H1 (cell line): ENCODE measurements at regions of chr17 and their contacts with region 1.

Region 1: DNA sequence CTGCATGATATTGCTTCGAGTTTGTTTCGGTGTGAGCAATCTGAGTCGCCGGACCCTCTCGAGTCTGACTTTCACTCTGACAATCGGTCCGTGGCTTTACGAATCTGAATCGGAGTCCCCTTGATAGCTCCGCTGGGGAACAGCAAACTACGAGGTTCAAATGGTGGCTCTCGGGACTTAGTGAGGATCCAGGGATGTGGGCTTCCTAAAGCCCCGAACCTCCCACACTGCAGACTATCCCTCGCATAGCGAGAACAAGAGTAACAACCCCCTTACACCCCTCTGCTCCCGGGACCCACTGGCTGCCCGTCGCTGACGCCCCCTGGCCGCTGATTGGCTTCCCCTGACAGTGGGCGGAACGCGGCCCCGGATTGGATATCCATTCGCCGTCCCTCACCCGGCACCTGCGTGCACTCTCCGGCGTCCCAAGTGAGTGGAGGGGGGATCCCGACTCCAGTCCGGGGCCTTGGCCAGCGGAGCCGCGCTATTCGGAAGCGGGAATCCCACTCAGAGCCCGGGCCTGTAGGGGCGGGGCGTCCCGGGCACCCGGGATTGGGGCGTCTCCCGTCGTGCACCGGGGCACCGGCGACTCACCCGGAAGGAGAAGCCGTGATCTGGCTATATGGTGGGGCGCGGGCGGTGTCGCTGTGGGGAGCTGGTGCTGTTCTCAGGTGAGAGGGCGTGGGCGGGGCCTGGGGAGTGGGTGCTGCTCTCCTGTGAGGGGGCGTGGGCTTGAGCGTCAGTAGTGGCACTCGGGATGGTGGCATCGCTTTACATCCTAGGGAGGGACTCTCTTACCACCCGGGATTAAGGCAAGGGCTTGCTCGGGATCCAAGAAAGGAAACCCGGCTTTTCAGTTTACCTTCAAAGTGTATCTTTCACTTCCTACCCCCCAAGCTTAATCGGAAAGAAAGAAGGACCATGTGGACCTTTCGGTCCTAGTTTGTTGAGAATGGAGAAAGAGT is at the start of gene SNX11:
- DNase-seq: peak; percentile 61 to 96
- H3K4me3 ChIP-seq: peak within 1 kb of the TSS; percentile 82 to 95 (median 88)
- H3K27ac ChIP-seq: peak within 1 kb of the TSS; percentile 69
- H3K4me1 ChIP-seq: no peaks in the 10 kb centered on the region; a peak in 1 of 7 replicates
- H3K27me3 ChIP-seq: no peaks in the 10 kb centered on the region
- CTCF ChIP-seq: no peak
- EP300 ChIP-seq: no peak
- POLR2A ChIP-seq: peak in 1 of 2 experiments; percentile 41; a peak in 1 of 3 replicates
- RAD21 ChIP-seq: no peak
- total RNA-seq, gene SNX11: 20.9 and 21.1 TPM in 2 replicates

Region 2: DNA sequence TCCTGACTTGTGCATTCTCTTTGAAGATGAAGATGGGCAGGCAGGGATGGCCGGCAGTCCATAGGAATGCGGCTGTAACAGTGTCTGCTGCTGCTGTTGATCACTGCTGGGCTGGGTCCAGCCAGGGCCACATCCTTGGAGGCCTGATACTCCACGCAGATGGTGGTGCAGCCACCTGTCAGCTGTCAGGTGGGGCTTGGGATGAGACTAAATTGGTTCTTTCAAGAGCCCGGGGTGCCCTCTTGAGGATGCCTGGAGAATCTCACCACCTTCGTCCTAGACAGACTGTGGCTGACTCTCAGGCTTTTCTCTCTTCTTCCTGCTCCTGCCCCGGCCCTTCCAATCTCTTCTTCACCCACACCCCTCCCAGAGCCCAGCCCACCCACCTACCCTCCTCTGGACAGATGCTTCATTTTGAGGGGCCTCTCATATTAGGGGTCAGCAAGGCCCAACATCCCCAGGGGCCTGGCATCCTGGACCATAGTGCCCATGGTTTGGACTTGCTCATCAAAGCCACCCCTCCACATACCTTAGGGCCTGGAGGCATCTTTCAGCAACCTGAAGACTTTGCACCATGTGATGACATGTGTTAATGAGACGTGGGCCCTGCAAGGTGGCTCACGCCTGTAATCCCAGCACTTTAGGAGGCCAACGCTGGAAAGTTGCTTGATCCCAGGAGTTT is 305.0 kb before region 1 on chr17:
- CTCF ChIA-PET with region 1: no interaction called
- POLR2A ChIA-PET with region 1: no interaction called
- DNase-seq: peak in 1 of 2 experiments; percentile 74
- H3K4me3 ChIP-seq: no peak overlapping the region
- H3K27ac ChIP-seq: no peak overlapping the region
- H3K4me1 ChIP-seq: no peaks in the 10 kb centered on the region
- H3K27me3 ChIP-seq: no peaks in the 10 kb centered on the region
- CTCF ChIP-seq: peak; percentile 55 to 84 (median 83)
- EP300 ChIP-seq: no peak
- POLR2A ChIP-seq: no peak
- RAD21 ChIP-seq: peak; percentile 84 to 86

Region 3: GRCh38 chr17:48068491-48068961 is 38.9 kb before region 1 on chr17:
- CTCF ChIA-PET with region 1: interaction called, 18 read pairs
- POLR2A ChIA-PET with region 1: interaction called, 7 read pairs
- DNase-seq: peak in 1 of 2 experiments; percentile 62
- H3K4me3 ChIP-seq: no peak overlapping the region
- H3K27ac ChIP-seq: no peak overlapping the region
- H3K4me1 ChIP-seq: peaks cover 0 to 2% (median 0%) of the 10 kb centered on the region in 4 experiments; a peak in 1 of 7 replicates
- H3K27me3 ChIP-seq: no peaks in the 10 kb centered on the region
- CTCF ChIP-seq: peak; percentile 60 to 74 (median 69)
- EP300 ChIP-seq: no peak
- POLR2A ChIP-seq: no peak
- RAD21 ChIP-seq: peak; percentile 39 to 51

Region 4: DNA sequence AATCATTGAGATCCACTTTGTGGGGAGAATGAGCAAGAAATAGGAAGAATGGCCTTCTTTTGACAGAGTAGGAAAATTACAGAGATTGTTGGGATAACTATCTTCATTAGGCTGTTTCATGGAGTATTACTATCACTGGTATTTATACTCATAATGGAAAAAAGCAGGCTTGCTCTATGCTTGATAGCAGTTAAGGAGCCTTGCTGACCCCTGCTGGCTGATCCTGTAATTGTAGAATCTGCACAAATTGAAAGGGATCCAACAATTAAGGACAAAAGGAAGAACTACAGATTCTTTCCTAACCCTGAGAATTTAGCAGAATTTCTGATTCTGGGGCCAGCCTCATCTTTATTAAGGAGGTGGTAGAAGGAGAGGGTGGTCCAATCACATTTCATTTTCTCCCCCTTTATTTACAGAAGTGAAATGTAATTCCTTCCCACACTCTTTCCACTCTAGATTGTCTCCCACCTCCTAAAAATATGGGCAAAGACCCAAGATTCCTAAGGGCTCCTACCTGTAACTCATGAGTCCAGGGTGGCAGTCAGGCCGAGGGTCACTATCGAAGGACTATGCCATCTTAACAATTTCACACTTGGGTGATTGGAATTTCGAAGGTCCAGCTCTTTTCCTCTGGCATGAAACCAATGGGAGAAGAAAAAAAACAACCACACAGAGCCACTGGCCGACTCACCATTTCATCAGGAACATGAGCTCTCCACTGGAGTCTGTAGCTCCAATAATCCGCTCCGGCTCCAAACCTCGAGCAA is 33.0 kb before region 1 on chr17:
- CTCF ChIA-PET with region 1: interaction called, 33 read pairs
- POLR2A ChIA-PET with region 1: interaction called, 3 read pairs
- DNase-seq: peak in 1 of 2 experiments; percentile 83
- H3K4me3 ChIP-seq: no peak overlapping the region
- H3K27ac ChIP-seq: no peak overlapping the region
- H3K4me1 ChIP-seq: no peaks in the 10 kb centered on the region
- H3K27me3 ChIP-seq: no peaks in the 10 kb centered on the region
- CTCF ChIP-seq: peak in 2 of 3 experiments; percentile 75 to 77; a peak in 3 of 4 replicates
- EP300 ChIP-seq: no peak
- POLR2A ChIP-seq: no peak
- RAD21 ChIP-seq: peak; percentile 67 to 75

Region 5: DNA sequence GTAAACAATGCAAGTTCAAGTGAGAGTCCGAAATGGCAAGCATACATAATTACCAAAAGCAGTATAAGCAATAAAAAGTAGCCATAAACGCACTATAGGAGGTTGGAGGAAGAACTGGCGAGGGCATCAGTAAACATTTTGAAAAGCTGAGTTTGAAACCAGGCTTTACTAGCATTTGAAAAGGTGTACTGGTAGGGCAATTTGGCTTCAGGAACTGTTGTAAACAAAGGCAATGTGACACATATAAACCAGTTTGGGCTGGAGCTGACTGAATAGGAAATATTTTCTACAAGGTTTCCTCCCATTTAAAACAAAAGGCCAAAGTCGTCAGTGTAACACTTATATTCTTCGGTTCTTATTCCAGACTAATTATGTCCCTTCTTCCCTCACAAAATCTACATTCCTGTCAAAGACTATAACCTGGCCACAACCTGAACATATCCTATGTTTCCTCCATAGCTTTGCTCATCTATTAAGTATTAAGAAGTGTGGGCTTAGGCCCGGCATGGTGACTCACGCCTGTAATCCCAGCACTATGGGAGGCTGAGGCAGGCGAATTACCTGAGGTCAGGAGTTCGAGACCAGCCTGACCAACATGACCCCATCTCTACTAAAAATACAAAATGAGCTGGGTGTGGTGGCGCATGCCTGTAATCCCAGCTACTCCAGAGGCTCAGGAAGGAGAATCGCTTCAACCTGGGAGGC is 14.0 kb before region 1 on chr17:
- CTCF ChIA-PET with region 1: interaction called, 26 read pairs
- POLR2A ChIA-PET with region 1: interaction called, 6 read pairs
- DNase-seq: no peak
- H3K4me3 ChIP-seq: no peak overlapping the region
- H3K27ac ChIP-seq: no peak overlapping the region
- H3K4me1 ChIP-seq: no peaks in the 10 kb centered on the region
- H3K27me3 ChIP-seq: no peaks in the 10 kb centered on the region
- CTCF ChIP-seq: no peak
- EP300 ChIP-seq: no peak
- POLR2A ChIP-seq: no peak
- RAD21 ChIP-seq: no peak

Region 6: DNA sequence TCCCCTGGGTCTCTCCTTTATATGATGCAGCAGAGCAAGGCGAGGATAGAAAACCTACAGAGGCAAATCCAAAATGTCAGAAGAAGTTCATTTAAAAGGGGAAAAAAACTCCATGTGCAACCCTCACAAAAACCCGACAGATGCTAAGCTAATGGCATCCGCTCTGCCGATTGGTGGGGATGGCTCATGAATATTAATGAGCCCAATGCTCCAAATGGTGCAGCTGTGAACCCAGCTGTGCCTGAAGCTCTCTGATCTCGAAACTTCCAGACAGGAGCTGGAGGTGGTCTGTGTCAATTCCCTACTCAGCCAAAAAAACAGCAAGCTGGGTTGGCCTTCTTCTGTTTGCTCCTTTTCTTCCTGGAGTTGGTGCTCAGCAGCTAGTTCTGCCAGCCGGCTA is 15.7 kb after region 1 on chr17:
- CTCF ChIA-PET with region 1: interaction called, 18 read pairs
- POLR2A ChIA-PET with region 1: interaction called, 10 read pairs
- DNase-seq: no peak
- H3K4me3 ChIP-seq: no peak overlapping the region
- H3K27ac ChIP-seq: no peak overlapping the region
- H3K4me1 ChIP-seq: no peaks in the 10 kb centered on the region
- H3K27me3 ChIP-seq: no peaks in the 10 kb centered on the region
- CTCF ChIP-seq: no peak
- EP300 ChIP-seq: no peak
- POLR2A ChIP-seq: no peak
- RAD21 ChIP-seq: no peak